HEK293T (cell line): ENCODE measurements at regions of chr6 and their contacts with region 1.

Region 1: DNA sequence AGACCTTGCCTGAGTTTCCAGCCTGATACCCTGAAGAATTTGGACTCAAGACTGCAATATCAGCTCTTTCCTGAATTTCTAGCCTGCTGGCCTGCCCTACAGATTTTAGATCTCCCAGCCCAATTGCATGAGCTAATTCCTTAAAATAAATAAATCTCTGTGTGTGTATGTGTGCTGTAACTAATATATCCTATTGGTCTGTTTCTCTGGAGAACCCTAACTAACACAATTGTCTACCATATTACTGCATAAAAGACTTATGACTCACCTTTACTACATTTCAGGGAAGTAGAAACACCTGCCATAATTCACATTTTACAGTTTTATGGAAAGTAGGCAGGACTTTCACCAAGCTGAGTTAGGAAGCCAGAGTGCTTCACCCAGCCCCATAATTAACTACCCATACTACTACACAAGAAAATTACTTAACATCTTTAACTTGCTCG is 90.7 kb upstream of the BEND6 start:
- DNase-seq: no peak

Region 2: GRCh38 chr6:56851541-56852259 is 12.5 kb before region 1 on chr6:
- CTCF ChIA-PET with region 1: interaction called, 24 read pairs
- POLR2A ChIA-PET with region 1: no interaction called
- DNase-seq: peak; percentile 64